ENCODE measurements at regions of chr21 and their contacts with region 1.

Region 1: GRCh38 chr21:33924079-33924765 is 8.6 kb upstream of the ATP5PO start:
- DNase-seq: peak; percentile 92
- ATAC-seq: peak; percentile 96
- H3K4me3 Mint-ChIP-seq: no peak overlapping the region
- H3K27ac Mint-ChIP-seq: peak overlapping the region; percentile 28
- H3K4me1 Mint-ChIP-seq: peaks cover 21% of the 10 kb centered on the region
- H3K27me3 Mint-ChIP-seq: no peaks in the 10 kb centered on the region

Region 2: GRCh38 chr21:33761441-33762036 is 162.7 kb before region 1 on chr21:
- CTCF ChIA-PET with region 1: no interaction called
- DNase-seq: no peak
- ATAC-seq: no peak
- H3K4me3 Mint-ChIP-seq: no peak overlapping the region
- H3K27ac Mint-ChIP-seq: no peak overlapping the region
- H3K4me1 Mint-ChIP-seq: no peaks in the 10 kb centered on the region
- H3K27me3 Mint-ChIP-seq: no peaks in the 10 kb centered on the region

Region 3: DNA sequence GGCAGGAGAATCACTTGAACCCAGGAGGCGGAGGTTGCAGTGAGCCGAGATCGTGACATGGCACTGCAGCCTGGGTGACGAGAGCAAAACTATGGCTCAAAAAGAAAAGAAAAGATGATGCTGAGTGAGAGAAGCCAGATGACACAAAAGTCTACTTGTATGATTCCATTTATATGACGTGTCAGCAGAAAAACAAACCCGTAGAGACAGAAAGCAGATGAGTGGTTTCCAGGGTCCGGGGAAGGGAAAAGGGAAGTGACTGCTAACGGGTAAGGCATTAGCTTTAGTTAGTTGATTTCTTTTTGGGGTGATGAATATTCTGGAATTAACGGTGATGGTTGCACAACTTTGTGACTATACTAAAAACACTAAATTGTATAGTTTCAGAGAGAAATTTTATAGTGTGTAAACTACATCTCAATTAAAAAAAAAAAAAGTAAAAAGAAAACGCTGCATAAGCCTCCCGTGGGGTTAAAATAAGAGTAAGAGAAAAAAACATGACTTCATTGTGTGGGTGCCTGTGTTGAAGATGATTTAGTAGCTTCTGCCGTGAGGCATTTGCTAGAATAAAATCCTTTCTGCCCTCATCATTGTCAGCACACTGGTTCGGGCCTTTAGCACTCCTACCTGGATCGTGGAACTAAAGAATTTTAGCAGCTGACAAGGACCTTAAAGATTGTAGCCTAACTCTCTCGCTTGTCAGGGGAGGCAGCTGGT is 16.1 kb after region 1 on chr21:
- CTCF ChIA-PET with region 1: interaction called, 11 read pairs
- DNase-seq: no peak
- ATAC-seq: no peak
- H3K4me3 Mint-ChIP-seq: no peak overlapping the region
- H3K27ac Mint-ChIP-seq: peak overlapping the region; percentile 27
- H3K4me1 Mint-ChIP-seq: peaks cover 60% of the 10 kb centered on the region
- H3K27me3 Mint-ChIP-seq: no peaks in the 10 kb centered on the region

Region 4: GRCh38 chr21:33968080-33968994 is 44.1 kb after region 1 on chr21:
- CTCF ChIA-PET with region 1: interaction called, 15 read pairs
- DNase-seq: no peak
- ATAC-seq: peak; percentile 69
- H3K4me3 Mint-ChIP-seq: no peak overlapping the region
- H3K27ac Mint-ChIP-seq: peak overlapping the region; percentile 16
- H3K4me1 Mint-ChIP-seq: peaks cover 32% of the 10 kb centered on the region
- H3K27me3 Mint-ChIP-seq: no peaks in the 10 kb centered on the region

Region 5: DNA sequence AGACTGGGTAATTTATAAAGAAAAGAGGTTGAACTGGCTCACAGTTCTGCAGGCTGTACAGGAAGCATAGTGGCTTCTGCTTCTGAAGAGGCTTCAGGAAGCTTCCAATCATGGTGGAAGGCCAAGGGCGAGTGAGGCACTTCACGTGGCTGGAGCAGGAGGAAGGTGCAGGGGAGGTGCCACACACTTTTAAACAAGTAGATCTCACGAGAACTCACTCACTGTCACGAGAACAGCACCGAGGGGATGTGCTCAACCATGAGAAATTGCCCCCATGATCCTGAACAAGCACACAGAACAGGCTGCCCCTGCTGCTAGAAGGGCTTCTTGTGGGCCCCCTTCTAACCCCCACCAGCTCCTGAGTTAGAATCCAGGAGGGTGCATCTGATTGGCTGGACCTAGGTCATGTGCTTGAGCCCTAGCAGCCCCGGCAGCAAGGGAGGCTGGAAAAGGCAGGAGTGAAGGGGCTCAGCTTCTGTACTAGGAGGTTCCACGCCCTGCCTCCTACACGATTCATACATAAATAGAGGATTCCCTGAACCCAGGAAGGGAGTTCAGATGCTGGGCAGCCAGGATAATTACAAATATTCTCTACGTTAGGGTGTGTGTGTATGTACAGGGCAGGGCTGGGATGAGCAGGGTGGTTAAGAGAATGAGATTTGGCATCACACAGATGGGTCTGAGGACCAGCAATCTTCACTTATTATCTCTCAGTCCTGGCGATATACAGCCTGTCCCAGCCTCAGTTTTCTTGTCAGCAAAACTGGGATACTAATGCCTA is 64.2 kb after region 1 on chr21:
- CTCF ChIA-PET with region 1: interaction called, 10 read pairs
- DNase-seq: no peak
- ATAC-seq: no peak
- H3K4me3 Mint-ChIP-seq: no peak overlapping the region
- H3K27ac Mint-ChIP-seq: no peak overlapping the region
- H3K4me1 Mint-ChIP-seq: peaks cover 13% of the 10 kb centered on the region
- H3K27me3 Mint-ChIP-seq: no peaks in the 10 kb centered on the region

Region 6: DNA sequence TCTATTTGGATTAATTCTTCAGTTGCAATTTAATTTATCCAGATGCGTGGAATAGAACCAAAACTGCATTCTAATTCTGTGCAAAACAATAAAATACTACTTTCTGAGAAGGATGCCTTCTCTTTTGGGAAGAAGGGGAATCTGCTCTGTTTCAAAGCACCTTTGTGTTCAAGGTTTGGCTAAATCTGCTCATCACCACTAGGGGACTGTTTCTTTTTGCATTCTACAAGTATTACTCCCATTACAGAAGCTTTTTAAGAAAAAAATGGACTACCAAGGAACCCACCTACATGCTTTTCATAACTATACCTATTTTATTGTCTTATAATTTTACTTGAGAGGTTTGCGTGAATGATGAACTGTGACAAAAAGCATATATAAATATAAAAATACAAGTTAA is 167.4 kb after region 1 on chr21:
- CTCF ChIA-PET with region 1: interaction called, 21 read pairs
- DNase-seq: no peak
- ATAC-seq: no peak
- H3K4me3 Mint-ChIP-seq: no peak overlapping the region
- H3K27ac Mint-ChIP-seq: no peak overlapping the region
- H3K4me1 Mint-ChIP-seq: peaks cover 44% of the 10 kb centered on the region
- H3K27me3 Mint-ChIP-seq: no peaks in the 10 kb centered on the region

Region 7: DNA sequence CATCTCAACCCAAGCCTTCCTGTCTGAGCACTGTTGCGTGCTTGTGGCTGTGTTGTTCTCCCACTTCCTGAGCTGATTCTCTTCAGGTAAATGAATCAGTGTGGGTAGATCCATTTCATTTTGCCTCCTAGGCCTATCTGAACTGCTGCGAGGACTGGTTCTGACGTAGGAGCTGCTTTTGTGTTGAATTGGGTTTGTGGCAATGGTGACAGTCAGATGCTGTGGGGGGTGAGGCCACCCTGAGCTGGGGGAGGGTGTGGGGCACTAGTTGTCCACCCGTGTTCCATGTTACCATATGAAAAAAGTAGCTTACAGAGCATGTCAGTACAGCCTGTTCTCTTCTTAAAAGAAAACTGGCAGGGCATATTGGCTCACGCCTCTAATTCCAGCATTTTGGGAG is 230.7 kb after region 1 on chr21:
- CTCF ChIA-PET with region 1: interaction called, 10 read pairs
- DNase-seq: peak; percentile 79
- ATAC-seq: peak; percentile 89
- H3K4me3 Mint-ChIP-seq: no peak overlapping the region
- H3K27ac Mint-ChIP-seq: peak overlapping the region; percentile 80
- H3K4me1 Mint-ChIP-seq: peaks cover 44% of the 10 kb centered on the region
- H3K27me3 Mint-ChIP-seq: no peaks in the 10 kb centered on the region

Region 8: GRCh38 chr21:34351786-34352241 is 427.6 kb after region 1 on chr21:
- CTCF ChIA-PET with region 1: interaction called, 200 read pairs
- DNase-seq: peak; percentile 52
- ATAC-seq: peak; percentile 72
- H3K4me3 Mint-ChIP-seq: no peak overlapping the region
- H3K27ac Mint-ChIP-seq: no peak overlapping the region
- H3K4me1 Mint-ChIP-seq: peaks cover 6% of the 10 kb centered on the region
- H3K27me3 Mint-ChIP-seq: peaks cover 24% of the 10 kb centered on the region

Measured in activated CD8-positive, alpha-beta memory T cell treated with anti-CD3 and anti-CD28 coated beads, Interleukin-2, amount 10 ng/mL, durations not matched to agents 7 days and 5 days (primary cell).